Astrocyte of the cerebellum (primary cell): ENCODE measurements at regions of chr22 and their contacts with region 1.

Region 1: GRCh38 chr22:26529345-26529744 is 17.1 kb upstream of the TFIP11 start:
- DNase-seq: no peak
- H3K4me3 ChIP-seq: no peak overlapping the region
- CTCF ChIP-seq: no peak

Region 2: DNA sequence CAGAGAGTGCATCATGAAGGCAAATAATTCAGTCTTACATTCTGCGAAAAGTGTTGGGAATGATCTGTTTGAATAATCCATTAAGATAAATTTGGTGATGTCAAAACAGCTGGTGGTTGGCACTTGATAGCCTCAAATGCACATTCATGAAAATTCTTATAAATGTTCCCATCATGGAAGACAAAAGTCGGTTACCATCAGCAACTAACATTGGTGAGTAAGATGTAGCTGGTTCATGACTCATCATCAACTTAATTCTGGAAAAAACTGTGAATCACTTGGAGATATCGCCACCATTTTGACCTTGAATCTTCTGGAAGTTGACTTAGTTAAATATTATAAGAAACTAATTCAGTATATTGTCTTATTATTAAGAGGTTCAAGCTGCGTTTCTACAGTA is 77.3 kb after region 1 on chr22:
- in situ Hi-C with region 1: loop called (anchors 5 kb)
- DNase-seq: peak; percentile 22
- H3K4me3 ChIP-seq: no peak overlapping the region
- CTCF ChIP-seq: no peak